ENCODE measurements at regions of chr13 and their contacts with region 1.

Region 1: DNA sequence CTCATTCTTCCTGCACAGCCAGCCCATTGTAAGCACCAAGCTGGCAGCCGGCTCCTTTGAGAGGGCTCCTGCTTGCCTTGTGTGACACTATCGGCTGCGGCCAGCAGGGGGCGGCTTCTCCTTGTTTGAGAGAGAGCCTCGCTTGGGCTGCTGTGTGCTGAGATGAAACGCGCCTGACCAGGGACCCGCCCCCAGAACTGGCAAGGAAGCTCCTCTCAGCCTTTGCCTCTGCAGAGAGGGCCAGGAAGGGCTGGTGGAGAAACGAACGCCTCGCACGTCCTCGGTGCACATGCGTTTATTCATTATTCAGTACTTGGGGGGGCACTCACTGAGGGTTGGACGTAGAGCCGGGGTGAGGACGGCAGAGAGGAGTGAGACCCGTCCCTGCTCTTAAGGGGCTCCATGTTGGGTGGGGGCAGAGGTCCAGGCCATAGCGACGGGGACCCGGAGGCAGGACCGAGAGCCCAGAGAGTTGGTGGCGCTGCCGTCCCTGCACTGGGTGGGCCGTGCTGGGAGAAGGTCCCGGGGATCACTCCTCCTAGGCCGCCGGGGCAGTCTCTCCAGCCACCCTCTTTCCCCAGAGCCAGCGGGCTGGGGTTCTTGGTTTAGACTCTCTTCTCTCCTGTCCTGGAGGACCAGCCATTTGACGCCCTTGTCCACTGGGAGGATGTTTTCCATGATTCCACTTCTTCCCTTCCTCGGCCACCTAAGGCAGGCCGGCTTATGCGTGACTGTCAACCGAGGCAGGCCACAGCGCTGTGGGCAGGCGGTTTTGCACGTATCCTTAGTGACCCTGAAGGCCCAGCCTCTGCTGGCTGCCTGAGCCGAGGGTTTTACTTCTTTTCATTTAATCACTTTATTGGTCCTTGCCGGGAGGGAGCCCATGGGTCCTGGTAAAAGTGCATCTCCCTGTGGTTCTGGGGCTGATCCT is 174.5 kb downstream of the KATNAL1 start:
- DNase-seq: peak; percentile 83 to 89
- ATAC-seq: peak; percentile 90 to 99
- H3K4me3 ChIP-seq: no peak overlapping the region
- H3K27ac ChIP-seq: no peak overlapping the region
- H3K4me1 ChIP-seq: no peaks in the 10 kb centered on the region
- H3K27me3 ChIP-seq: no peaks in the 10 kb centered on the region
- CTCF ChIP-seq: peak; percentile 84 to 90 (median 90)
- POLR2A ChIP-seq: no peak

Region 2: GRCh38 chr13:30334663-30335386 is 201.9 kb after region 1 on chr13:
- in situ Hi-C with region 1: loop called in 1 of 4 experiments (anchors 25 kb)
- intact Hi-C with region 1: no loop called
- DNase-seq: no peak
- ATAC-seq: peak; percentile 32 to 57
- H3K4me3 ChIP-seq: no peak overlapping the region
- H3K27ac ChIP-seq: no peak overlapping the region
- H3K4me1 ChIP-seq: peaks cover 3% of the 10 kb centered on the region in 2 donors
- H3K27me3 ChIP-seq: no peaks in the 10 kb centered on the region
- CTCF ChIP-seq: peak in 4 of 5 experiments; percentile 27 to 50 (median 37)
- POLR2A ChIP-seq: no peak

Region 3: GRCh38 chr13:30429721-30430694 is 297.1 kb after region 1 on chr13:
- in situ Hi-C with region 1: loop called in 1 of 4 experiments (anchors 25 kb)
- intact Hi-C with region 1: no loop called
- DNase-seq: no peak
- ATAC-seq: peak; percentile 87 to 94
- H3K4me3 ChIP-seq: no peak overlapping the region
- H3K27ac ChIP-seq: peak overlapping the region in 3 of 4 donors; percentile 26 to 62 (median 37)
- H3K4me1 ChIP-seq: peaks cover 0 to 7% of the 10 kb centered on the region in 2 donors
- H3K27me3 ChIP-seq: no peaks in the 10 kb centered on the region
- CTCF ChIP-seq: no peak
- POLR2A ChIP-seq: no peak

Region 4: DNA sequence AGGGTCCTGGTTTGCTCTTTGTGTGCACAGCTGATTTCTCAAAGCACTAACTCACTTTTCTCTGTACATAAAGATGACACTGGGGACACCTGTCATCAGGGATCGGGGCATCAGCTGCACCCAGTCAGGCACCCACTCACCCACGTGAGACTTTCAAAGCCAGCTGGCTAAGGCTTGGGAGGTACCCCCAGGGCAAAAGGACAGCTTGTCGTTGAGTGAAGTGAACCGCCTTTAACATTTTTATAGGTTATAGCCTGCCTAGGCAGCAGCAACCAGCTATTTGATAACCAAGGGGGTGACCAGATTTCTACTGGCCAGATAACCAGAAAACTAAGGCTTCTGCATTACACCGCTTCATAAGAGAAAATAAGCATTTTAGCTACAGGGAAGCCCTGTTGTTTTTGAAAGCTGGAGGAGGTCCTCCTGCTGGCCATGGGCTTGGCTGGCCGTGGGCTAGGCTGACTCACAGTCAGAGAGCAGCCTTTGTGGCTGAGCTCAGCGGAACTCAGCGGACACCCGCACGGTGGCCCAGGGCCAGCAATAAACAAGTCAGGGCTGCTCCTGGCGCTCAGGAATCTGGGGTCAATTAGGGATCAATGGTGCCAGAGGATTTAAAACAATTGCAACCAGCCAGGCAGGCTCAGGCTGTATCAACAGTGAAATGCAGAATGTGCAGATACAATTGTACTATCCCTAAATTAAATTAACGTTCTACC is 659.6 kb after region 1 on chr13:
- in situ Hi-C with region 1: loop called in 1 of 4 experiments (anchors 25 kb)
- intact Hi-C with region 1: no loop called
- DNase-seq: peak; percentile 25 to 55
- ATAC-seq: peak; percentile 59 to 66
- H3K4me3 ChIP-seq: no peak overlapping the region
- H3K27ac ChIP-seq: peak overlapping the region in 1 of 4 donors; percentile 19
- H3K4me1 ChIP-seq: peaks cover 7 to 15% of the 10 kb centered on the region in 2 donors
- H3K27me3 ChIP-seq: no peaks in the 10 kb centered on the region
- CTCF ChIP-seq: peak in 2 of 5 experiments; percentile 21 to 23
- POLR2A ChIP-seq: no peak

Region 5: DNA sequence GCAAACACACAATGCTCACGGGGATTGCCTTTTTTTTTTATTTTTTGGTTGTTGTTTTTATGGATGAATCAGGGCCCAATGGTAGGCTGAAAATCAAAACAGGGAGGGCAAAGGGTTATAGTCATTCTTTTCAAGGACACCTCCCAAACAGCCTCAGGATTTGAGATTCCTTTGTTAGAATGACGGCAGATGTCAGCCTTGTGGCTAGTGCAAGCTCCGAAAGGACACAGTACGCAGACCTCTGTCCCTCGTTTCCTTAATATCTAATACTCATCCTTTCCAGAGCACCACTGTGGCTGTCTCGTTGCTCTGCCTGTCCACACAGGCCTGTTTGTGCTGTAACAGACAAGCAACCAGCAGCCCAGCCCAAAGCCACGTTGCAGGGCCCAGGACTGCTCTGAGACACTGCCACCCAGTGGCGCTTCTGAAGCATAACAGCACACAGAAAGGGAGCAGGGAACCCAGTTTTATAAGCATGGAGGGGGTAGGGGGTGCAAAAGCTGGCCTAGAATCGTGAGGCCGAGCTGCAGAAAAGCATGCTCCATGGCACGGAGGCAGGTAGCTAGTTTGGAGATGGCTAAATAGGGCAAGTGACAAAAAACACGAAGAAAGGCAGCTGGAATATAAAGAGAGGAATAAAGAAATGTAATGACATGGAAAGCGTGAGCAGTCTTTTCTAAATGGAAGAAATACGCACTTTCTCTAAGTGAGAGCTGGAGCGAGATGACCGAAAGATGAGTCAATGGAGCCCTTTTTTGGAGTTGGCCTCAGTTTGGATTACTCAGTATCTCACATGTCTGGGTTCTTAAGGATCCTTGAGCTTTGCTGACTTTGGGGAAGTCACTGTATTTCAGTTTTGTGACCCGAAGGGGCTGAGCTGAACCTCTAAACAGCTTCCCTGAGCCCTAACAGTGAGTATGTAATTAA is 732.5 kb after region 1 on chr13:
- in situ Hi-C with region 1: no loop called
- intact Hi-C with region 1: loop called (anchors 5 kb)
- DNase-seq: peak; percentile 68 to 71
- ATAC-seq: peak; percentile 69
- H3K4me3 ChIP-seq: no peak overlapping the region
- H3K27ac ChIP-seq: peak overlapping the region; percentile 34 to 49 (median 43)
- H3K4me1 ChIP-seq: peaks cover 6 to 23% of the 10 kb centered on the region in 2 donors
- H3K27me3 ChIP-seq: no peaks in the 10 kb centered on the region
- CTCF ChIP-seq: peak; percentile 67 to 90 (median 81)
- POLR2A ChIP-seq: peak in 1 of 2 donors; percentile 6

Region 6: DNA sequence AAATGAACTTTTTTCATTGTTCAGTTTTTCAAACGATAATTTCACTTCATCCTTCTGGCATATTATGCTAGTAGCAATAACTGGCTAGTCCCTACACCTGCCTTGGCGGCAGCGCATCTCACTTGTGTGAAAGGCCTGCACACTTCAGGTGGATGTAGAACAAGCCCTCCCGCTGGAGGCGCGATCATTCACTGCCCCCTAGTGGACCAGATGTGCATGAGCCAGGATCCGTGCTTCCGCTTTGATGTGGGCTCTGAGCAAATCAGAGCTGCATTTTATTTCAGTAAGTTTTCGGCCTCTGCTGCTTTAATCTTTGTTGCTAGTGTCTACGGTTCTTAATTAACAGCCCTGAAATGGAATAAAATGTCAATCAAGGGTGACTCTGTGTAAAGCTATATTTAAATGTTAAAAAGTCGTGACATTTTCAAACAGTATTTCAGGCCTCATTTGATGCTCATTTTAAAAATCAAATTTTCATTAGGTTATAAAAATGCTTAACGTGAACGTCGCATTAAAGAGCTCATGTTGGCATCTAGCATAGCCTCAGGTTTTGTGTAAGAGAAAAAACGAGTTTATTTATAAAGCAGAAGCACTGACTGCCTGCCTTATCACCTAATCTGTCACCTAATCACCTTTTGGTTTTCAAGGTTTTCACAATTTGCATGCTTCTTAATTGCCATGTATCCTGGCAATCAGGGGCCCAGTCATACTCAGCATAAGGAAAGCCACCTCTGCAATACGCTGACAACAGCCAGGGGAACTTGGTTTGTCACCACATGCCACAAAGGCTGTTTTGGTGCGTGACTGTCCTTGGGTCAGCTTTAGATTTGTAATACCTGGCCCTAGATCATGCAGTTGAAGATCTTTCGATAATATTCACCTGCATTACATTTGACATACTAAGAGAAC is 911.7 kb after region 1 on chr13:
- in situ Hi-C with region 1: loop called in 3 of 4 experiments (anchors 25 kb)
- intact Hi-C with region 1: loop called (anchors 5 kb)
- DNase-seq: peak; percentile 33 to 52
- ATAC-seq: peak; percentile 65 to 80
- H3K4me3 ChIP-seq: no peak overlapping the region
- H3K27ac ChIP-seq: no peak overlapping the region
- H3K4me1 ChIP-seq: peaks cover 0 to 4% of the 10 kb centered on the region in 2 donors
- H3K27me3 ChIP-seq: peaks cover 0 to 3% (median 0%) of the 10 kb centered on the region in 3 donors
- CTCF ChIP-seq: peak; percentile 50 to 92 (median 72)
- POLR2A ChIP-seq: no peak